Cardiac septum (tissue), 1 donor: ENCODE measurements at regions of chr1 and their contacts with region 1.

Region 1: GRCh38 chr1:154558575-154559465 is at the start of gene UBE2Q1:
- DNase-seq: peak; percentile 99
- total RNA-seq, gene UBE2Q1: 65.5 TPM

Region 2: GRCh38 chr1:154607609-154608396 is 49.0 kb after region 1 on chr1 and contains the start of gene ADAR:
- intact Hi-C with region 1: loop called (anchors 1 kb)
- DNase-seq: peak; percentile 97
- total RNA-seq, gene ADAR: 54.1 TPM

Region 3: GRCh38 chr1:154682254-154682653 is 123.4 kb after region 1 on chr1:
- intact Hi-C with region 1: no loop called
- DNase-seq: no peak

Region 4: DNA sequence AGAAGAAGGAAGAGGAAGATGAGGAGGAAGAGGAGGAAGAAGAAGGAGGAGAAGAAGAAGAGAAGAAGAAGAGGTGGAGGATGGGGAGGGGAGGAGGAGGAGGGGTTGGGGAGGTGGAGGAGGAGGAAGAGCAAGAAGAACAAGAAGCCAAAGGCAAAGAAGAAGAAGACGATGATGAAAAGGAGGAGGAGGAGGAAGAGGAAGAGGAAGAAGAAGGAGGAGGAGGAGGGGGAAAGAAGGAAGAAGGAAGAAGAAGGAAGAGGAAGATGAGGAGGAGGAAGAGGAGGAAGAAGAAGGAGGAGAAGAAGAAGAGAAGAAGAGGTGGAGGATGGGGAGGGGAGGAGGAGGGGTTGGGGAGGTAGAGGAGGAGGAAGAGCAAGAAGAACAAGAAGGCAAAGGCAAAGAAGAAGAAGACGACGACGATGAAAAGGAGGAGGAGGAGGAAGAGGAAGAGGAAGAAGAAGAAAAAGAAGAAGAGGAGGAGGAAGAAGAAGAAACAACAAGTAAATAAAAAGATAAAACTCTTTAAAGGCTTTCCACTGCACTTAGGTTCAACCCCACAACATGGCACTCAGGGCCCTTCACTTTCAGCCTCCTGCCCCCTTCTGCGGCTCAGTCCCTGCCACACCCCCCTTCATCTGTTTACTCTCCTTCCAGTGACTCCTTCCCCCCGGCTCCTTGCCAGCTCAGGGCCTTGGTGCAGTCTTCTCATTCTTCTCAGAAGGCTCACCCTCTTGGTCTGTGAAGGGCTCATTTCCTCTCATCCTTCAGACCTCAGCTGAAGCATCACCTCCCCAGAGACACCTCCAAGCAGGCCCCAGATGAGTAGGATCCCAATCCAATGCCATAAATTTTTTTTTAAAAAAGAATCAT is 197.3 kb after region 1 on chr1:
- intact Hi-C with region 1: loop called (anchors 5 kb)
- DNase-seq: no peak

Region 5: DNA sequence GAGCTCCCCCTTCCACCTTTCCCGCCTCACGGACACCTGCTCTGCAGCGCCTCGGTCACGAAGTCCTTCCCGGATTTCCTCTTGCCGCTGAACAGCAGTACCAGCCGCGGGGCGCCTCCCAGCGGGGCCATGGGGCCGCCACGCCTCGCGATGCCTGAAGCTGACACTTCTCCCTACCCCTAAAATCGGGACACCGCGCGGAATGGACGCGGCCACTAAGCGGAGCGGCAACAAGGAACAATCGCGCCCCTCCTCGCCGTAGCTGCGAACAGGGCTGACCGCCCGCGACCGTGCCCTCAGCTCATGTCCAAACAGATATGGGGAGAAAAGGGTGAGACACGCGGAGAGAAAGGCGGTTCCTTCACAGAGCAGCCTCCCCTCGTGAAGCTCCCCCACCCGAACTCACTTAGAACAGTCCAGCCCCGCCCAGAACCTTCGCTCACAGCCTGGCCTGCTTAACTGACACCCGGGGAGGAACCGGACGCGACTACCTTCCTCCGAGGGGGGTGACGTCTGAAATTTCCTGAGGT is 377.8 kb after region 1 on chr1 and contains the start of gene PMVK:
- intact Hi-C with region 1: loop called (anchors 2 kb)
- DNase-seq: peak; percentile 99
- total RNA-seq, gene PMVK: 30.9 TPM